Activated CD4-positive, alpha-beta T cell treated with anti-CD3 and anti-CD28 coated beads for 36 hours (primary cell): ENCODE measurements at regions of chr10 and their contacts with region 1.

Region 1: DNA sequence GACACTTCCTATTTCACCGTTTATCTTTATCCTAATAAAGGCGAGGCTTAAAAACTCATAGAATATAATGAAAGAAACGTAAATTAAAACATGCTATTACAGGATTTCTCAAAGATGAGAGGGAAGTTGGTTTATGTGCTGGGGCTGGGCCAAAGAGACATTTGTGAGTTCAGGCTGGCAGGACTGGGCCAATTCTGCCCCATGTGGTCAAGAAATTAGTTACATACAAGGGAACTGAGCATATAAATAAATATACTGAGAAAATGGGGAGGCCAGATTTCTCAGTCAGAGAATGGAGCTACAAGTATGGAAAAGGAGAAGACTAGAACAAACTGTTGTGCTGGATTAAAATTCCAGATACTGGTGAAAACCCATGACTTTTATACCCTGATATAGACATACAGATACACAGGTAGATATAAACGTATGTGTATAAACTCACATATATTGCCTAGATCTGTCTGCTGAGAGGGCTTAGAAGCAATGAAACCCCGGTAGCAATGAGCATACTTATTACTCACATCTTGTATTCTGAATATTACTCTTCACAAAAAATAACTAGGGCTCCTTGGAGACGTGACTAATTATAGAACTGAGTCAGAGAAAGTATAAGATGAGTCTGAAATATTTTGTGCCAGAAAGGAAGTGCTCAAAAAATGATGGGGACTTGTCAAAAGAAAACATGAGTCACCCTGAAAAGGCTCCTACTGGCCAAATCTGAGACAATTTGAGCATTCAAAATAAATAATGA is 155.7 kb upstream of the FGFR2 start:
- DNase-seq: no peak
- ATAC-seq: peak; percentile 97
- H3K4me3 Mint-ChIP-seq: peak overlapping the region; percentile 39
- H3K27ac Mint-ChIP-seq: peak overlapping the region; percentile 73
- H3K4me1 Mint-ChIP-seq: peaks cover 23% of the 10 kb centered on the region
- H3K27me3 Mint-ChIP-seq: no peaks in the 10 kb centered on the region

Region 2: GRCh38 chr10:121741248-121741792 is 12.6 kb before region 1 on chr10:
- CTCF ChIA-PET with region 1: interaction called, 4 read pairs
- POLR2A ChIA-PET with region 1: no interaction called
- intact Hi-C with region 1: loop called in 1 of 2 experiments (anchors 1 kb)
- DNase-seq: no peak
- ATAC-seq: no peak
- H3K4me3 Mint-ChIP-seq: no peak overlapping the region
- H3K27ac Mint-ChIP-seq: no peak overlapping the region
- H3K4me1 Mint-ChIP-seq: peaks cover 16% of the 10 kb centered on the region
- H3K27me3 Mint-ChIP-seq: peaks cover 11% of the 10 kb centered on the region

Region 3: DNA sequence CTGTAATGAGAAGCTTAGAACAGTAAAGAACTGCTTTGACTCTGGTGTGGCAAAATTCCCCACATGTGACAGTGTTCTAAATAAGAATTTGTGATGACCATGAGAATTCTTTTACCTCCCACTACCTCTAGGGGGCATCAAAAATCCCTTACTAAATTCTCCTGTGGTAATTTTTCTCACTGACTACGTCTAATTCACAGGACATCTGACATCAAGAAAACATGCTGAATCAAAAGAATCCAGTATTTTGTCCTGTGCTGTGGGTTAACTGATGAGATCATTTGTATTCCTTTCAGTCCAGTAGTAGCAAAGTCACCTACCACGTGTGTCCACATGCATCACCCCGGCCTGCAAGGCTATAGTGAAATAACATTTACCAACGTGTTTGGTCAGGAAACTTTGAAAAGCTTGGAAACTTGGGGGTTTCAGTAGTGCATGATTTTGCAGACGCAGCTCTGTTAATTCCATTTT is 70.1 kb after region 1 on chr10:
- CTCF ChIA-PET with region 1: interaction called, 3 read pairs
- POLR2A ChIA-PET with region 1: no interaction called
- intact Hi-C with region 1: loop called in 1 of 2 experiments (anchors 5 kb)
- DNase-seq: no peak
- ATAC-seq: peak; percentile 46
- H3K4me3 Mint-ChIP-seq: no peak overlapping the region
- H3K27ac Mint-ChIP-seq: no peak overlapping the region
- H3K4me1 Mint-ChIP-seq: peaks cover 4% of the 10 kb centered on the region
- H3K27me3 Mint-ChIP-seq: no peaks in the 10 kb centered on the region

Region 4: DNA sequence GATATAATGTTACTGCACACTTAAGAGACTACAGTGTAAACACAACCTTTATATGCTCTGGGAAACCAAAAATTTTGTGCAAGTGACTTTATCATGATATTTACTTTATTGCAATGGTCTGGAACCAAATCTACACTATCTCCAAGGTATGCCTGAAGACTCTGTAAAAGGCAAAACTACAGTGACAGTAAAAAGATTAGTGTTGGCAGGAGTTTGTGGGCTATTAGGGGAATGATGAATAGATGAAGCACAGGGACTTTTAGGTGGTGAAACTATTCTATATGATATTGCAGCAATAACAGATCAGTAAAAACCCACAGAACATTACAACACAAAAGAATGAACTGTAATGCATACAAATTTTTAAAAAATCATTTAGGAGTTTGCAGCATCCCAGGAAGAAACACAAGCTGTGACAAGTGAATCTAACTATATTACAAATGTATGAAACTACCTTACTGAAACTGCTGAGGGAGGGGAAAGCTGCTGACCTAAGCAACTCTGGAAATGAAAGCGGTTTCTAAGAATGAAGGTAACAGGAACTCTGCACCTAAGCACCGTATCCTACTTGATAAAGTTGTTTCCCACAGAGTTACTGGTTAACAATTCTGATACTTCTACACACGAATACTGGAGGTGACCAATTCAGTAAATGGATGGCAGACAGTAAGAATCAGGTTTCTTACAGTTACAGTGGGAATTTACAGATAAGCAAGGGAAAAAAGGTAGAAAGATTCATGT is 91.3 kb after region 1 on chr10:
- CTCF ChIA-PET with region 1: no interaction called
- POLR2A ChIA-PET with region 1: no interaction called
- intact Hi-C with region 1: loop called in 1 of 2 experiments (anchors 1 kb)
- DNase-seq: peak; percentile 16
- ATAC-seq: peak; percentile 83
- H3K4me3 Mint-ChIP-seq: no peak overlapping the region
- H3K27ac Mint-ChIP-seq: no peak overlapping the region
- H3K4me1 Mint-ChIP-seq: peaks cover 11% of the 10 kb centered on the region
- H3K27me3 Mint-ChIP-seq: no peaks in the 10 kb centered on the region